Activated naive CD4-positive, alpha-beta T cell treated with anti-CD3 and anti-CD28 coated beads, Interleukin-2, amount 10 ng/mL, durations not matched to agents 7 days and 5 days (primary cell): ENCODE measurements at regions of chr1 and their contacts with region 1.

Region 1: DNA sequence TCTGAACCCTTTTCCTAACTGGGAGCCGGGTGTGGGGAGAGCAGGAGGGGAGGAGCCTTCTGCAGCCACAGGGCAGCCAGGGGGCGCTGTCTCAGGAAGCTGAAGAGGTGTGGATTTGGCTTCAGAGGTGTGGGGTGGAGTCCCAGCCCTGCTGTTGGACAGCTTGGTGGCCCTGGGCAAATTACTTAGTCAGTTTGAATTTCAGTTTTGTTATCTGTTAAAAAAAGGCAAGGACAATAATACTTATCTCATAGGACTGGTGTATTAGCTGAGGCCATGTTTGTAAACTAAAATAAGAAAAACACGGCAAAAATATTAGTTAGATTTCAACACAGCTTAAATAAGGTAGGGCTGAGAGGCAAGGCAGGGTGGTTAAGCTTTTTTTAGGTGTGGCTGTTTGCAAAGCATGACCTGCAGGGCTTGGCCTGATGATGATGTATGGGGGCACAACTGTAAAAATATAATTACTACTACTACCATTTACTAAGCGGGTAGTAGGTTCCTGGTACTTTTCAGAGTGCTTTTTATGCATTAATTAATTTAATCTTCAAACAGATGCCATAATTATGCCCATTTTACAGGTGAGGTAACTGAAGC is 111.8 kb downstream of the PLXNA2 start:
- DNase-seq: peak; percentile 72
- H3K4me3 Mint-ChIP-seq: no peak overlapping the region
- H3K27ac Mint-ChIP-seq: no peak overlapping the region
- H3K4me1 Mint-ChIP-seq: peaks cover 5% of the 10 kb centered on the region
- H3K27me3 Mint-ChIP-seq: peaks cover 38% of the 10 kb centered on the region

Region 2: DNA sequence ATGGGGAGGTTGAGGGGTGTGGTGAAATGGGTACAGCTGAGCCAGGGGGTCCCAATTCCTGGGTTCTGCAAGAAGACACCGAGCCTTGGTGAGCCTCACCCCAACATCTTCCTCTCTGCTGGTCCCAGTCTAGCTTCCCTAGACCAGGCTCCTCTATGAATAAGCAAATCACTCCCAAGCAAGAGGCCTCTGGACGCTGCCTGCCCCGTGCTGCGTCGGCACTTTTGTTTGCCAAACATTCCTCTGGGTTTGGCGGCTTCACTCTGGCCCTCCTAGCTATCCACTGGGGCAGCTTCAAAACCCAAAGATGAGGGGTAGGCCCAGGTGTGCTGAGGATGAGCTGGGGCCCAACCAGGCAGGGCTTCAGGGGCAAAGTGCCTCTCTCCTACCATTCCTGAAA is 84.4 kb before region 1 on chr1:
- CTCF ChIA-PET with region 1: no interaction called
- DNase-seq: no peak
- H3K4me3 Mint-ChIP-seq: no peak overlapping the region
- H3K27ac Mint-ChIP-seq: no peak overlapping the region
- H3K4me1 Mint-ChIP-seq: peaks cover 23% of the 10 kb centered on the region
- H3K27me3 Mint-ChIP-seq: peaks cover 49% of the 10 kb centered on the region

Region 3: DNA sequence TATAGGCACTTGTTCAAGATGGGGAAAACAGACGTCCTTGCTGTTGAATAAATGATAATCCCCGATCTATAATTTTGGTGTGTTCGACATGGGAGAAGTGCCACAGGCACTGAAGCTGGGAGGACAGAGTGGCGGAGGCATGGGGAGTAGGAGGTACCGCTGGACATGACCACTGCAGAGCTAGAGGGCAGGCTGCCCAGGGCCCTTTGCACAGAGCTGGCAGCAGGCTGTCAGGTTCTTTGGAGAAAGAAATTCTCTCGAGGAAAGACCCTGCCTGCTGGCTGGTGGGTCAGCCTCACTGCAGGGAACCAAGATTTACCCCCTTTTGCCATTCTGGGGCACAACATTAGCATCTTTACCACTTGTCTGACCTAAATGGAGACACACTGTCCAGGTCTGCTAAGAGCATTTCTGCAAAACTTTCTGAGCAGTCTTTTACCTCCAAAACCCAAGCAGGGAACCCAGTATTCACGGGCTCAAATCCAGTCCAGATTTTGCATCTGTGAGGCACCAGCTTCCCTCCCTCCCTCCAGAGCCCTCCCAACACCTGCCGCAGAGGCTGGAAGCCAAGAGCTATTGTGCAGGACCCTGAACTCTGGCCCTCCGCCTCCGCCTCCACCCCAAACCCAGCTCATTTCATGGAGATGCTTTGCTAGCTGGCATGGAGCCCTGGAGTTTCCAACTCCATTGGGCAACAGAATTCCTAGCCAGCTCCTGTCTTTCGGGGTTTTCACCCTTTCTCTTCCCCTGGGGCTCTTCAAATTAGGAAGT is 30.5 kb before region 1 on chr1:
- CTCF ChIA-PET with region 1: no interaction called
- DNase-seq: no peak
- H3K4me3 Mint-ChIP-seq: no peak overlapping the region
- H3K27ac Mint-ChIP-seq: no peak overlapping the region
- H3K4me1 Mint-ChIP-seq: no peaks in the 10 kb centered on the region
- H3K27me3 Mint-ChIP-seq: peaks cover 27% of the 10 kb centered on the region

Region 4: GRCh38 chr1:208239473-208240381 is 107.3 kb after region 1 on chr1:
- CTCF ChIA-PET with region 1: interaction called, 44 read pairs
- DNase-seq: no peak
- H3K4me3 Mint-ChIP-seq: no peak overlapping the region
- H3K27ac Mint-ChIP-seq: no peak overlapping the region
- H3K4me1 Mint-ChIP-seq: peaks cover 23% of the 10 kb centered on the region
- H3K27me3 Mint-ChIP-seq: peaks cover 100% of the 10 kb centered on the region

Region 5: GRCh38 chr1:208245185-208245705 is 112.9 kb after region 1 on chr1:
- CTCF ChIA-PET with region 1: interaction called, 44 read pairs
- DNase-seq: peak; percentile 85
- H3K4me3 Mint-ChIP-seq: peak overlapping the region; percentile 63
- H3K27ac Mint-ChIP-seq: no peak overlapping the region
- H3K4me1 Mint-ChIP-seq: peaks cover 10% of the 10 kb centered on the region
- H3K27me3 Mint-ChIP-seq: peaks cover 77% of the 10 kb centered on the region